Lower leg skin (tissue), 4 donors: ENCODE measurements at regions of chr2 and their contacts with region 1.

Region 1: GRCh38 chr2:137900421-137901141 is 63.7 kb upstream of the HNMT start:
- DNase-seq: no peak
- H3K4me3 ChIP-seq: no peak overlapping the region
- CTCF ChIP-seq: no peak
- POLR2A ChIP-seq: no peak

Region 2: DNA sequence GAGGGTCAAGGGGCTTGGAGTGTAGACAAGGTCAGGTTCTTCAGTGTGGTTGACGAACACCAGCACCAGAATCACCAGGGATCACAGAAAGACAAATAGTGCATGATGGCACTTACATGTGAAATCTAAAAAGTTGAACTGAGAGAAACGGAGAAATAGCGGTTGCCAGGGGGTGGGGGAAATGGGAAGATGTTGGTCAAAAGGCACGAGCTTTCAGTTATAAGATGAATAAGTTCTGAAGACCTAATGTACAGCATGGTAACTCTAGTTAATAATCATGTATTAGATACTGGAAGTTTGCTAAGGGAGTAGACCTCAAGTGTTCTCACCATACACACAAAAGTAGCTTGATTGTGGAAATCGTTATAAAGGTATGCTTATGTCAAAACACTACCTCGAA is 1871.4 kb before region 1 on chr2:
- intact Hi-C with region 1: no loop called
- DNase-seq: no peak
- H3K4me3 ChIP-seq: no peak overlapping the region
- CTCF ChIP-seq: no peak
- POLR2A ChIP-seq: no peak

Region 3: GRCh38 chr2:137888845-137889244 is 11.7 kb before region 1 on chr2:
- intact Hi-C with region 1: no loop called
- DNase-seq: no peak
- H3K4me3 ChIP-seq: no peak overlapping the region
- CTCF ChIP-seq: no peak
- POLR2A ChIP-seq: no peak

Region 4: GRCh38 chr2:138827426-138828054 is 927.0 kb after region 1 on chr2:
- intact Hi-C with region 1: loop called (anchors 10 kb)
- DNase-seq: no peak
- H3K4me3 ChIP-seq: no peak overlapping the region
- CTCF ChIP-seq: no peak
- POLR2A ChIP-seq: no peak

Region 5: DNA sequence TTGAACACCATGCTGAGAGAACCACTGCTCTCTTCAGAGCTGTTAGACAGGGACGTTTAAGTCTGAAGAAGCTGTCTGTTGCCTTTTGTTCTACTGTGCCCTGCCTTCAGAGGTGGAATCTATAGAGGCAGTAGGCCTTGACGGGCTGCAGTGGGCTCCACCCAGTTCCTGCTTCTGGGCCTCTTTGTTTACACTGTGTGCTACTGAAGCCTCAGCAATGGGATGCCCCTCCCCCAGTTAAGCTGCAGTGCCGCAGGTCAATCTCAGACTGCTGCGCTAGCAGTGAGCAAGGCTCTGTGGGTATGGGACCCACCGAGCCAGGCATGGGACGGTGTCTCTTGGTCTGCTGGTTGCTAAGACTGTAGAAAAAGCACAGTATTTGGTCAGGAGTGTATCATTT is 1041.9 kb after region 1 on chr2:
- intact Hi-C with region 1: loop called (anchors 5 kb)
- DNase-seq: no peak
- H3K4me3 ChIP-seq: no peak overlapping the region
- CTCF ChIP-seq: no peak
- POLR2A ChIP-seq: no peak